K562 (cell line): ENCODE measurements at regions of chr14 and their contacts with region 1.

Region 1: GRCh38 chr14:95431199-95432143 is 85.0 kb downstream of the SYNE3 start:
- DNase-seq: peak; percentile 28 to 44 (median 38)
- ATAC-seq: peak; percentile 90
- H3K4me3 ChIP-seq: no peak overlapping the region
- H3K27ac ChIP-seq: no peak overlapping the region
- H3K4me1 ChIP-seq: no peaks in the 10 kb centered on the region; a peak in 1 of 5 replicates
- H3K27me3 ChIP-seq: peaks cover 0 to 4% of the 10 kb centered on the region in 2 experiments; a peak in 2 of 5 replicates
- CTCF ChIP-seq: peak; percentile 52 to 66 (median 66)
- EP300 ChIP-seq: no peak
- POLR2A ChIP-seq: no peak
- RAD21 ChIP-seq: peak in 1 of 2 experiments; percentile 49; a peak in 2 of 4 replicates

Region 2: GRCh38 chr14:95227279-95227860 is 204.1 kb before region 1 on chr14:
- CTCF ChIA-PET with region 1: no interaction called
- POLR2A ChIA-PET with region 1: no interaction called
- in situ Hi-C with region 1: no loop called
- intact Hi-C with region 1: loop called (anchors 10 kb)
- DNase-seq: no peak
- ATAC-seq: no peak
- H3K4me3 ChIP-seq: no peak overlapping the region
- H3K27ac ChIP-seq: no peak overlapping the region
- H3K4me1 ChIP-seq: no peaks in the 10 kb centered on the region
- H3K27me3 ChIP-seq: peaks cover 10 to 33% of the 10 kb centered on the region in 2 experiments; a peak in 4 of 5 replicates
- CTCF ChIP-seq: no peak
- EP300 ChIP-seq: no peak
- POLR2A ChIP-seq: no peak
- RAD21 ChIP-seq: no peak

Region 3: DNA sequence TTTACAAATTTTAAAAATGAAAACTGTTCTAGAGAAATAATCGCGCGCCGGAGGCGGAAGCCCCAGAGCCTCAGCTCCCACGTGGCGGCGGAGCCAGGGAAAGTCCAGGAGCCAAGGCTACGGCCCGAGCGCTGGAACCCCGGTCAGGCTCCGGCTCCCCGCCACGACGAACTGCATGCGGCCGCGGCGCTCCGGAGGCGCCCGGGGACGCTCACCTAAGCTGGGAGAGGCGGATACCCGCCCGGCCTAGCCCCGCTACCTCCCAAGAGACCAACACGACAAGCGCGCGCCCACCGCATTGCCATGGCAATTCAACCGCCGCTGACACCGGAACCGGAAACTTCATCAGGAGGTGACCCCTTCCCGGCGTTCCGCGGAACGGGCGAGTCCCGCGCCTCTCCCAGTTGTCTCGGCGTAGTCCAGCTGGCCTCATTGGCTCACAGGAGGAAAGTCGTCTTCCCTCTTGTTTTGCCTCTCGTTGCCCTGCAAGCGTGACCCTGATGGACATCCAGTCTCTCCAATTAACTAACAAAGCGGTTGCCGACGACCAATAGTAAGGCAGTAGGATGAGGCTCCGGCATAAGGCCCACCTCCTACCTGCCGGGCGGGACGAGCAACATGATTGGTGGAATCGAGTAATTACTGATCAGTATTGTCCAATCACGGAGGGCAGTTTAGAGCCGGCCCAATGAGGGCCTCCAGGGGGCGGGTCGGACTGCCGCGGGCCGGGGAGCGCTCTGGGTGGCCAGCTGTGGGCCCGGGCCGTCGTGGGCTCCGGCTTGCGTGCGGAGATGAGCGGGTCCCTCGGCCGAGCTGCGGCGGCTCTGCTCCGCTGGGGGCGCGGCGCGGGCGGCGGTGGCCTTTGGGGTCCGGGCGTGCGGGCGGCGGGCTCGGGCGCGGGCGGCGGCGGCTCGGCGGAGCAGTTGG is 103.1 kb after region 1 on chr14 and contains the start of gene GLRX5:
- CTCF ChIA-PET with region 1: no interaction called
- POLR2A ChIA-PET with region 1: no interaction called
- in situ Hi-C with region 1: no loop called
- intact Hi-C with region 1: no loop called
- DNase-seq: peak; percentile 93 to 99 (median 96)
- ATAC-seq: peak; percentile 87
- H3K4me3 ChIP-seq: peak within 1 kb of the TSS; percentile 86
- H3K27ac ChIP-seq: peak within 1 kb of the TSS; percentile 94
- H3K4me1 ChIP-seq: peaks cover 9 to 27% of the 10 kb centered on the region in 2 experiments; a peak in 4 of 5 replicates
- H3K27me3 ChIP-seq: no peaks in the 10 kb centered on the region
- CTCF ChIP-seq: no peak
- EP300 ChIP-seq: no peak
- POLR2A ChIP-seq: peak; percentile 81
- RAD21 ChIP-seq: no peak
- polyA plus RNA-seq, gene GLRX5: 16.7 to 20.0 TPM